AG04450 (cell line): ENCODE measurements at regions of chr1 and their contacts with region 1.

Region 1: GRCh38 chr1:29062157-29062942 is 61.4 kb downstream of the TMEM200B start:
- DNase-seq: no peak
- H3K4me3 ChIP-seq: no peak overlapping the region
- H3K27ac ChIP-seq: no peak overlapping the region
- H3K27me3 ChIP-seq: peaks cover 2% of the 10 kb centered on the region
- CTCF ChIP-seq: no peak

Region 2: GRCh38 chr1:28845786-28846543 is 216.4 kb before region 1 on chr1:
- CTCF ChIA-PET with region 1: no interaction called
- POLR2A ChIA-PET with region 1: no interaction called
- DNase-seq: no peak
- H3K4me3 ChIP-seq: no peak overlapping the region
- H3K27ac ChIP-seq: no peak overlapping the region
- H3K27me3 ChIP-seq: peaks cover 5% of the 10 kb centered on the region
- CTCF ChIP-seq: peak; percentile 29; the same call in 1 of the 2 replicates

Region 3: GRCh38 chr1:29083317-29084195 is 21.2 kb after region 1 on chr1:
- CTCF ChIA-PET with region 1: no interaction called
- POLR2A ChIA-PET with region 1: interaction called, 15 read pairs
- DNase-seq: no peak
- H3K4me3 ChIP-seq: no peak overlapping the region
- H3K27ac ChIP-seq: no peak overlapping the region
- H3K27me3 ChIP-seq: no peaks in the 10 kb centered on the region
- CTCF ChIP-seq: no peak